ENCODE measurements at regions of chr11 and their contacts with region 1.

Region 1: GRCh38 chr11:95835768-95836488 is 45.6 kb downstream of the CEP57 start:
- DNase-seq: peak; percentile 65
- ATAC-seq: peak; percentile 78
- H3K4me3 Mint-ChIP-seq: no peak overlapping the region
- H3K27ac Mint-ChIP-seq: no peak overlapping the region
- H3K4me1 Mint-ChIP-seq: no peaks in the 10 kb centered on the region
- H3K27me3 Mint-ChIP-seq: no peaks in the 10 kb centered on the region

Region 2: DNA sequence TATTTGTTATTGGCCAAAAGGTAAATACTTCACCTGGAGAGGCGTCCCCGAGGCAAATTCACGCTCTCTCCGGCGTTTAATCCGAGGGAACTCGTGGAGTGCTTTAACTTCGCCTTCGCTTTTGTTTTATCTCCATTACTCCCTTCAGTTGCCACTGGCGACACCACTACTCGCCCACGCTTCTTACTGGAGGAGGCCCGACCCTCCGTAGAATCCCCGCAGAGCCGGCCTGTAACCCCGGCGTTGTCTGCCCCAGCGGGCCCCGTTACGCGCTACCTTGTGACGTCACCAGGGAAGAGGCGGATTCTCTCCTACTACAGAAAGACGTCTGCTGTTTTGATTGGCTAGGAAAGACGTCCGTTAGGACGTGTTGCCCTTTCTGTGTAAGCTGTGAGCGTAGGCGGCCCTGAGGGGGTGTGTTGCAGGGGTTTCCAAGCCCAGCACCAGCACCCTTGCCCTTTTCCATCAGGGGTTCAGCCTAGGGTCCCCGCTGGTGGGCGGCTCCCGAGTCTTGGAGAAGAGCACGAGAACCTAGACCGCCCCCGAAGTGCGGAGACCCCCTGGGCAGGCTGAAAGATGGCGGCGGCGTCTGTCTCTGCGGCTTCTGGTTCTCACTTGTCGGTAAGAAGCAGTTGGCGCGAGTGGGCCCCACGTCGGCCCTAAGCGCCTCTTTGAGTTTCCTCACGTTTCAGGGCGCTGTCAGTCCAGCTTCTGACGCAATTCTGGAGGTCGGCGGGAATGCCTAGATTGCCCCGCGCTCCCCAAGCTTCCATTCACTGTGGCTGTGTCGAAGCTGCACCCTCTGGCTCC is 45.6 kb before region 1 on chr11 and contains the start of gene CEP57:
- CTCF ChIA-PET with region 1: interaction called, 10 read pairs
- POLR2A ChIA-PET with region 1: interaction called, 3 read pairs
- DNase-seq: peak; percentile 97
- ATAC-seq: peak; percentile 69
- H3K4me3 Mint-ChIP-seq: peak within 1 kb of the TSS; percentile 99
- H3K27ac Mint-ChIP-seq: peak within 1 kb of the TSS; percentile 100
- H3K4me1 Mint-ChIP-seq: peaks cover 55% of the 10 kb centered on the region
- H3K27me3 Mint-ChIP-seq: no peaks in the 10 kb centered on the region
- total RNA-seq, gene CEP57: 85.4 to 86.6 TPM

Region 3: DNA sequence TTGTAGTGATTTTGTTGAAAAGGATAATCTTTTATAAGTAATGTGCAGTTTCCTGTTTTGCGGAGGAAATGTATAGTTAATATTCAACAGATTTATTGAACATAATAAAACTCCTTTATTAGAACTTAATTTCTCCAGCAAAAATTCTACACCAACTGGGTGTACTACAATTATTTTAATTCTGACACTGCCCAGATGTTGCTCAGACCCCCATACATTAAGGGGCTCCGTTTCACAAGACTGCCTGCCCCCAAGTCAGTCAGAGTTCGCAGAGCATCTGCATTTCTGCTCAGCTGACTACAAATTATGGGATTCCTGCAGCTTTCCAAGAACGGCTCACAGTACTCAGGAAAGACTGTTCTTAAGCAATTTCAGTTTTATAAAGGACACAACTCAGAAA is 39.4 kb before region 1 on chr11:
- CTCF ChIA-PET with region 1: interaction called, 10 read pairs
- POLR2A ChIA-PET with region 1: no interaction called
- DNase-seq: no peak
- ATAC-seq: no peak
- H3K4me3 Mint-ChIP-seq: no peak overlapping the region
- H3K27ac Mint-ChIP-seq: no peak overlapping the region
- H3K4me1 Mint-ChIP-seq: peaks cover 36% of the 10 kb centered on the region
- H3K27me3 Mint-ChIP-seq: no peaks in the 10 kb centered on the region

Region 4: DNA sequence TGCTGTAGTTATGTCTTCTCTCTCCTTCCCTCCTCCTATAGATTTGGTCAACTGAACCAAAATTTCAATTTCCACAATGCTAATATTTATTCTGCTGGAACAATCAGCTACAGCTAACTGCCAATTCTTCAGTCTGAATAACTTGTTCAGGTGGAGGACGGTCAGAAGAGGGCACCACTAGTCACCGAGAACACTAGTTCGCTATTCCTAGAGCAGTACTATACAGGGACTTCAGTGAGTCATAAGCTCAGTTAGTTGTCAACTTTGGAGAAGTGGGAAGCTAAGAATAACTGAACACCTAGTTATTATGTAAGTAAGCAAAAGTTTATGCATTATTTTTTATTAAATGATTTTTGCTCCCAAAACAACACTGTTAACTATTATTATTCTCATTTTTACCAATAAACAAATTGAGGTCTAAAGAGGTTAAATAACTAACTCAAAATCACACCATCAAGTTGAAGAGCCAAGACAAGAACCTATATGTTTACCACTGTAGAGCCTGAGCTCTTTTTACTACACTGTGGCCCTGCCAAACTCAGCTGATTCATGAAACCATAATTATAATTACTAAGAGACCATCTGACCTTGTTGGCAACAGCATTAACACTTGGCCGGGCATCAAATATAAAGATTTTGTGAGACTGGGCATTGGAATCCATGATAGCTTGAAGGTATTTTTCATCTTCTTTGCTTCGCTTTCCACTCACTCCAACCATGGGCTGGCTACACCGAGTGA is 13.3 kb after region 1 on chr11:
- CTCF ChIA-PET with region 1: interaction called, 19 read pairs
- POLR2A ChIA-PET with region 1: no interaction called
- DNase-seq: peak; percentile 29
- ATAC-seq: no peak
- H3K4me3 Mint-ChIP-seq: no peak overlapping the region
- H3K27ac Mint-ChIP-seq: no peak overlapping the region
- H3K4me1 Mint-ChIP-seq: peaks cover 2% of the 10 kb centered on the region
- H3K27me3 Mint-ChIP-seq: no peaks in the 10 kb centered on the region

Region 5: GRCh38 chr11:96389720-96390487 is 554.0 kb after region 1 on chr11 and contains the starts of genes CCDC82 and JRKL:
- CTCF ChIA-PET with region 1: interaction called, 36 read pairs
- POLR2A ChIA-PET with region 1: no interaction called
- DNase-seq: peak; percentile 98
- ATAC-seq: peak; percentile 95
- H3K4me3 Mint-ChIP-seq: peak within 1 kb of the TSS; percentile 91
- H3K27ac Mint-ChIP-seq: peak within 1 kb of the TSS; percentile 97
- H3K4me1 Mint-ChIP-seq: peaks cover 59% of the 10 kb centered on the region
- H3K27me3 Mint-ChIP-seq: no peaks in the 10 kb centered on the region
- total RNA-seq, gene CCDC82: 35.7 to 37.5 TPM
- total RNA-seq, gene JRKL: 9.4 to 10.3 TPM

Region 6: DNA sequence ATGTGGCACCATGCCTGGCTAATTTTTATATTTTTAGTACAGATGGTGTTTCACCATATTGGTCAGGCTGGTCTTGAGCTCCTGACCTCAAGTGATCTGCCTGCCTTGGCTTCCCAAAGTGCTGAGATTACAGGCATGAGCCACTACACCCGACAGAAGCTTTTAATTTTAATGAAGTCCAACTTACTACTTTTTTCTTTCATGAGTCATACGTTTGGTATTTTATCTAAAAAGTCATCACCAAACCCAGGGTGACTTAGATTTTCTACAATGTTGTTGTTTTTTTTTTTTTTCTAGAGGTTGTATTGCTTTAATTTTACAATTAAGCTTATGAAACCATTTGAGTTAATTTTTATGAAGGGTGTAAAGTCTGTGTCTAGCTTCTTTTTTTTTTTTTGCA is 588.8 kb after region 1 on chr11:
- CTCF ChIA-PET with region 1: interaction called, 12 read pairs
- POLR2A ChIA-PET with region 1: no interaction called
- DNase-seq: no peak
- ATAC-seq: no peak
- H3K4me3 Mint-ChIP-seq: no peak overlapping the region
- H3K27ac Mint-ChIP-seq: no peak overlapping the region
- H3K4me1 Mint-ChIP-seq: no peaks in the 10 kb centered on the region
- H3K27me3 Mint-ChIP-seq: peaks cover 23% of the 10 kb centered on the region

Region 7: DNA sequence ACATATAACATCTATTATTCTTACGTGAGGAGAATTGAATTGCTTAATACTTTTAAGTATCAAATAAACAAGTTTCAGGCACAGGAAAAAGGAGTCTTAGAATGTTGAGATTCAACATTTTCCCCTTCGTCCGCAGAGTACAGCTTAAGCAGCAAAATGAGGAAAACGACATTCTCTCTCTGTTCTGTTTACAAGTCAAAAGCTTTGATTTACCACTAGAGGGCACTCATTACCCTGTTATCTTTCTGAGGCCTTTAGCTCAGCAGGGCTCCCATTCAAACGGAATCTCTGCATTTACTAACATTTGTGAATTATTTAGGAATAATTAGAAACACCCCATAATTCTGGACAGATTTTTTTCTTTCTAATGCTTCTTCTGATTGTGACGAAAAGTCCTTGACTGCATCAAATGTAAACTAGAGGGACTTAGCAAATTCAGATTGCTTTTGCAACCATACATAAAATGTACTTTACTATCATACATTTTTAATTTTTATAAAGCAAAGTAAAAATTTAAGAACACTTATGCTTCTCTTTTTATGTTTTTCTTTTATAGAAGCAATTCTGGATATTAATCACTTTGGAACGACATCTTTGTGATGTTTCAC is 628.9 kb after region 1 on chr11:
- CTCF ChIA-PET with region 1: interaction called, 10 read pairs
- POLR2A ChIA-PET with region 1: no interaction called
- DNase-seq: no peak
- ATAC-seq: peak; percentile 77
- H3K4me3 Mint-ChIP-seq: no peak overlapping the region
- H3K27ac Mint-ChIP-seq: no peak overlapping the region
- H3K4me1 Mint-ChIP-seq: no peaks in the 10 kb centered on the region
- H3K27me3 Mint-ChIP-seq: peaks cover 4% of the 10 kb centered on the region